ENCODE measurements at regions of chr17 and their contacts with region 1.

Region 1: GRCh38 chr17:57243171-57243948 is 13.0 kb upstream of the MSI2 start:
- DNase-seq: peak; percentile 83
- CTCF ChIP-seq: peak; percentile 99

Region 2: DNA sequence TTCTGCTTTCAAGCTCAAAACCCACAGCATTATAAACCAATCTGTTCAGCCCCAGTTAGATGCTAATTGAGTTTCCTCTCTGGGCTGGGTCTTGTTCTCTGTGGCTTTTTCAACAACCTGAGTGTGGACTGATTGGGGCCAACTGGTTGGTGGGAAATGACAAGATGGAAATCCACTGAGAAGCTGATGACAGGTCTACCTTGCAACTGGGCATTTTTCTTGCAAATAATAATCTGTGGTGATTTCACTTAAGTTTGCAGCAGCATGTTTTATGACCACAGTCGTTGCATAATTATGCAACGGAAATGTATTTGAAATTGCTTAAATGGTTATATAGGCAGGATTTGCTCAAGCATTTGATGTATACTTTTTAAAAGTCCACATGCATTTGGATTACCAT is 88.4 kb before region 1 on chr17:
- in situ Hi-C with region 1: no loop called
- DNase-seq: no peak
- CTCF ChIP-seq: no peak

Region 3: GRCh38 chr17:57305903-57306504 is 62.6 kb after region 1 on chr17:
- in situ Hi-C with region 1: no loop called
- DNase-seq: no peak
- CTCF ChIP-seq: no peak

Region 4: GRCh38 chr17:57662644-57663308 is 419.4 kb after region 1 on chr17:
- in situ Hi-C with region 1: loop called (anchors 10 kb)
- DNase-seq: no peak
- CTCF ChIP-seq: no peak

Region 5: GRCh38 chr17:57747221-57748017 is 504.1 kb after region 1 on chr17:
- in situ Hi-C with region 1: loop called (anchors 5 kb)
- DNase-seq: peak; percentile 71
- CTCF ChIP-seq: peak; percentile 63

Measured in GM13976 (cell line).